CD4-positive, alpha-beta memory T cell (primary cell): ENCODE measurements at regions of chr19 and their contacts with region 1.

Region 1: DNA sequence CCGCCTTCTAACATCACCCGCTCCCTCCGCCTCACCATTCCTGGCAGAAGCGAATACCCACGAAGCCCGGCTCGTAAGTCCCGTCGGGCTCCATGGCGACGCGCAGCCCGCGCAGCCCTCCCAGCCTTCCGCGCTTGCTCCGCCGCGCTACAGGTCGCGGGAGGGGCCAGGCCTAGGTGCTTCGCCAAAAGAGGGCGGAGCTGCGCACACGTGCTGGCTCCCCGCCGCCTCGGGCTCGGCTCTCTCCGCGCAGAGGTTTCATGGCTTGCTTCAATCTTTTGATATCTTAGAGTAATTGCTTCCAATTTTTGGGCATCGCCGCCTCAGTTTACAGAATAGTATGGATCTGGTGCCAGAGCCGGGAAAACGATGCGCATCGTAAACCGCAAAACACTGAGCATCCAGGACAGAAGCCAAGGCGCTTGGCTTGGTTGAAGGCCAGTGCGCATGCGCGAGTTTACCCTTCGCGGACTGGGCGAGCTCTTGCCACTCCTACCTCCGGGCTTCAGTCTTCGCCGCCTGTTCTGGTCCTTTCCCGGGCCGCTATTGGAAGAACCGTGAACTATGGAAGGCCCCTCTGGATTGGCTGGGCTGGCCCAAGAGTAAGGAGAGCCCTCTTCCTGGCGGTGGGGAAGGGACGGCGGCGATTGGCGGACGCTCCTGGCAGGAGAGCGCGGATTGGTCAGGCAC is at the start of gene POLR2I:
- DNase-seq: peak; percentile 99 to 100 (median 100)
- H3K4me3 ChIP-seq: peak within 1 kb of the TSS; percentile 75 to 99
- H3K4me3 Mint-ChIP-seq: peak within 1 kb of the TSS; percentile 89 to 99 (median 94)
- H3K27ac ChIP-seq: peak within 1 kb of the TSS; percentile 80
- H3K27ac Mint-ChIP-seq: peak within 1 kb of the TSS; percentile 95 to 100 (median 98)
- H3K4me1 ChIP-seq: peaks cover 30% of the 10 kb centered on the region
- H3K4me1 Mint-ChIP-seq: peaks cover 23 to 53% (median 37%) of the 10 kb centered on the region in 4 donors
- H3K27me3 ChIP-seq: no peaks in the 10 kb centered on the region
- H3K27me3 Mint-ChIP-seq: peaks cover 0 to 2% of the 10 kb centered on the region in 2 donors
- total RNA-seq, gene POLR2I: 52.4 to 55.0 TPM

Region 2: DNA sequence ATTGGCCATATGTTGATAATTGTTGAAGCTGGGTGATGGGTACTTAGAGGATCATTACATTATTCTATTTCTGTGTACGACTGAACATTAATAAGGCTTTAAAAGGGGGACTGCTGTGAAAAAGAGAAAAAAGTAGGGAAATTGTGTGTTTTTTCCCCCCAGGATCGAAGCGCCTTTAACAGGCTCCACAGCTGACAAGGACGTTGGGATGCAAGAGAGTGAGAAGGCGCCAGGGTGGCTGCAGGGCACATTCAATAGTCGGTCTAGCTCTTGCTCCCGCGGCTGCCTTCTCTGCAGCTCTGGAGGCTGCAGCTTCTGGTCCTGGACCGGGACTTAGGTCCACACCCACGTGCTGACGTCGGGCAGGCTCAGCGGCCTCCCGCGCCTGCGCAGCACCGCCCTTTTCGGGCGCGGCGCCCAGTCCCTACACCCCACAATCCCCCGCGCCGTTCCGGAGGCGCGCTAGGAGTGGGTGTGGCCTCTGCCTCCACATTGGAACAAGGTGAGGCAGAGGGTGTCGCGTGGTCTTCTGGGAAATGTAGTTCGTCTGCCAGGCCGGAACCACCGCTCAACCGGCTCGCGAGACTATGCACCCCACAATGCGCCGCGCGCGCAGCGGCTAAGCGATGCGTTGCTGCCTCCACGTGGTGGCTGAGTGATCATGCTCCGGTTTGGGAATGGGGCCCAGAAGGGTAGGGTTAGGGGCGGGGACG is 183.6 kb before region 1 on chr19:
- CTCF ChIA-PET with region 1: no interaction called
- POLR2A ChIA-PET with region 1: interaction called, 3 read pairs
- intact Hi-C with region 1: loop called (anchors 1 kb)
- DNase-seq: peak; percentile 99 to 100 (median 100)
- H3K4me3 ChIP-seq: peak overlapping the region in 1 of 2 donors; percentile 49
- H3K4me3 Mint-ChIP-seq: peak overlapping the region; percentile 76 to 85 (median 80)
- H3K27ac ChIP-seq: peak overlapping the region; percentile 54
- H3K27ac Mint-ChIP-seq: peak overlapping the region; percentile 86 to 97 (median 95)
- H3K4me1 ChIP-seq: peaks cover 47% of the 10 kb centered on the region
- H3K4me1 Mint-ChIP-seq: peaks cover 27 to 62% (median 38%) of the 10 kb centered on the region in 4 donors
- H3K27me3 ChIP-seq: no peaks in the 10 kb centered on the region
- H3K27me3 Mint-ChIP-seq: no peaks in the 10 kb centered on the region

Region 3: DNA sequence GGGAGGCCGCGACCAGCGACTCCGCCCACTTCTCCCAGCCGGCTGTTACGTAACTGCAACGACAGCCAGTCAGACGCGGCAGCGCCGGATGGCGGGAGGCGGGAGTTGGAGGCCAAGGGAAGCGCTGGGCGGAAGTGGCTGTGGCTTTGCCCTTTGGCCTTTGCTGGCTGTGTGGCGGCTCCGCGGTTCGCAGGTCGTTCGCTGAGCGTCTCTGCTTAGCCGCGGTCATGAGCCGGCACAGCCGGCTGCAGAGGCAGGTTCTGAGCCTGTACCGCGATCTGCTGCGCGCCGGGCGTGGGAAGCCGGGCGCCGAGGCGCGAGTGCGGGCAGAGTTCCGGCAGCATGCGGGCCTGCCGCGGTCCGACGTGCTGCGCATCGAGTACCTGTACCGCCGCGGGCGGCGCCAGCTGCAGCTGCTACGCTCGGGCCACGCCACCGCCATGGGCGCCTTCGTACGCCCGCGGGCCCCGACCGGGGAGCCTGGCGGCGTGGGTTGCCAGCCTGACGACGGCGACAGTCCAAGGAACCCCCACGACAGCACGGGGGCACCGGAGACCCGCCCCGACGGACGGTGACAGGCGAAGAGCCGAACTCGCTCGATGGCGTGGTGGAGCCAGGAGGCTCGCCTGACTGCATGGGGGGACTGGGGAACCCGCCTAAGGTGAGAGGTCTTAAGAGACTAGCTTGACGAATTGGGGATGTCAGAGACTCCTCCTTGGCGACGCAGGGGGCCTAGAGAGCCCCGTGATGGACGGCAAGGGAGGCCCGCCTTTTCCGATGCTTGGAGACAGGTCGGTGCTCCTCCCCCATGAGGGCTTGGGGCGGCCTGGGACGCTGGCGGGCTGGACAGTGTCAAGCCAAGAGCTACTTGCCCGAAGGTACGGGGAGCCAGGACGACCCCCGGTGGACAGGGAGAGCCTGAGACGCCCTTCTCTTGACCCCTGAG is 119.6 kb before region 1 on chr19 and contains the start of gene SDHAF1:
- CTCF ChIA-PET with region 1: no interaction called
- POLR2A ChIA-PET with region 1: interaction called, 14 read pairs
- intact Hi-C with region 1: loop called (anchors 2 kb)
- DNase-seq: peak; percentile 87 to 92 (median 87)
- H3K4me3 ChIP-seq: peak within 1 kb of the TSS; percentile 69 to 82
- H3K4me3 Mint-ChIP-seq: peak within 1 kb of the TSS; percentile 91 to 96 (median 94)
- H3K27ac ChIP-seq: peak within 1 kb of the TSS; percentile 71
- H3K27ac Mint-ChIP-seq: peak within 1 kb of the TSS; percentile 92 to 97 (median 97)
- H3K4me1 ChIP-seq: peaks cover 26% of the 10 kb centered on the region
- H3K4me1 Mint-ChIP-seq: peaks cover 20 to 48% (median 37%) of the 10 kb centered on the region in 4 donors
- H3K27me3 ChIP-seq: no peaks in the 10 kb centered on the region
- H3K27me3 Mint-ChIP-seq: no peaks in the 10 kb centered on the region
- total RNA-seq, gene SDHAF1: 25.7 to 25.8 TPM

Region 4: GRCh38 chr19:36054119-36054732 is 60.7 kb before region 1 on chr19 and contains the start of gene THAP8:
- CTCF ChIA-PET with region 1: interaction called, 3 read pairs
- POLR2A ChIA-PET with region 1: interaction called, 30 read pairs
- intact Hi-C with region 1: loop called (anchors 1 kb)
- DNase-seq: peak; percentile 99 to 100 (median 100)
- H3K4me3 ChIP-seq: peak within 1 kb of the TSS; percentile 79 to 93
- H3K4me3 Mint-ChIP-seq: peak within 1 kb of the TSS; percentile 96 to 100 (median 99)
- H3K27ac ChIP-seq: peak within 1 kb of the TSS; percentile 78
- H3K27ac Mint-ChIP-seq: peak within 1 kb of the TSS; percentile 98 to 99 (median 98)
- H3K4me1 ChIP-seq: peaks cover 11% of the 10 kb centered on the region
- H3K4me1 Mint-ChIP-seq: peaks cover 16 to 41% (median 21%) of the 10 kb centered on the region in 4 donors
- H3K27me3 ChIP-seq: no peaks in the 10 kb centered on the region
- H3K27me3 Mint-ChIP-seq: no peaks in the 10 kb centered on the region
- total RNA-seq, gene THAP8: 5.1 to 7.0 TPM

Region 5: GRCh38 chr19:36125557-36125956 is 10.6 kb after region 1 on chr19:
- CTCF ChIA-PET with region 1: interaction called, 21 read pairs
- POLR2A ChIA-PET with region 1: interaction called, 34 read pairs
- intact Hi-C with region 1: loop called (anchors 1 kb)
- DNase-seq: no peak
- H3K4me3 ChIP-seq: no peak overlapping the region
- H3K4me3 Mint-ChIP-seq: peak overlapping the region in 1 of 8 donors; percentile 9
- H3K27ac ChIP-seq: no peak overlapping the region
- H3K27ac Mint-ChIP-seq: peak overlapping the region in 5 of 7 donors; percentile 42 to 71 (median 57)
- H3K4me1 ChIP-seq: peaks cover 14% of the 10 kb centered on the region
- H3K4me1 Mint-ChIP-seq: peaks cover 4 to 14% (median 11%) of the 10 kb centered on the region in 4 donors
- H3K27me3 ChIP-seq: no peaks in the 10 kb centered on the region
- H3K27me3 Mint-ChIP-seq: no peaks in the 10 kb centered on the region

Region 6: DNA sequence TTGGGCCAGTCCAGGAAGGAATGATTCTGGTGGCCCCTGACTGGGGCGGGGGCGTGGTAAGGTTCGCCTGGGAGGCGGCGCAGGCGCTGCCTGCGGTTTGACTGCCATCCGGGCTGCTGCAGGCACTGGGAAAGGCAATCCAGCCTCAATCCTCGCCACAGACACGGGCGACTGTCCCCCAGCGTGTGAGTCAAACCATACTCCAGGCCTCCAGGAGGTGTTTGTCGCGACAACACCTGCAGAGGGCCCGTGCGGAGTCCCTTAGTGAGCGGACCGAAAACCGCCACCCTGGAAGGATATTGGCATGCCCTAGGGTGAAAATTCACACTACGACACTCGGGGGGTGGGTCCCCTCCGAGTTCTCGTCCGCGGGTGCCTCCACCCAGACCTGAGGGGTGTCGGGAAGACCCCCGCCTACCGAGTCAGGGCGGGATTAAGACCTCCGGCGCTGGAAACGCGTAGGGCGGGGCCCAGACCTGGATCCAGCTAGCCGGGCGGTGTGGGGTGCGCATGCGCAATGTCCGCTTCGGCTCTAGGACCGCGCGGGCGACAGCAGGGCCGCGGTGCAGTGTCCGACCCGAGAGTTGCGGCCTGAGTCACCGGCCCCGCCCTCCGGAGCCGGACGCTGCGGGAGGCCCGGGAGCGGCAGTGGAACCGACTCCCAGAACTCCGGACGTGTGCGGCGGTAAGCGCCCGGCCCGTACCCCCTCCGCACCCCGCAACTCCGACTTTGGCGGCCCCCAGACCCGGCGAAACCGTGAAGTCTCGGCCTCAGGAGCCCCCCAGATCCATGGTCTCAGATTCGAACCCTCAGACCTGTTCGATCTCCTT is 24.8 kb after region 1 on chr19 and contains the start of gene CAPNS1:
- CTCF ChIA-PET with region 1: no interaction called
- POLR2A ChIA-PET with region 1: interaction called, 21 read pairs
- intact Hi-C with region 1: loop called (anchors 1 kb)
- DNase-seq: peak; percentile 87 to 90 (median 88)
- H3K4me3 ChIP-seq: peak within 1 kb of the TSS; percentile 74 to 84
- H3K4me3 Mint-ChIP-seq: peak within 1 kb of the TSS; percentile 92 to 97 (median 96)
- H3K27ac ChIP-seq: peak within 1 kb of the TSS; percentile 88
- H3K27ac Mint-ChIP-seq: peak within 1 kb of the TSS; percentile 70 to 97 (median 95)
- H3K4me1 ChIP-seq: peaks cover 15% of the 10 kb centered on the region
- H3K4me1 Mint-ChIP-seq: peaks cover 12 to 31% (median 23%) of the 10 kb centered on the region in 4 donors
- H3K27me3 ChIP-seq: no peaks in the 10 kb centered on the region
- H3K27me3 Mint-ChIP-seq: no peaks in the 10 kb centered on the region
- total RNA-seq, gene CAPNS1: 255 to 259 TPM